ENCODE measurements at regions of chr10 and their contacts with region 1.

Region 1: DNA sequence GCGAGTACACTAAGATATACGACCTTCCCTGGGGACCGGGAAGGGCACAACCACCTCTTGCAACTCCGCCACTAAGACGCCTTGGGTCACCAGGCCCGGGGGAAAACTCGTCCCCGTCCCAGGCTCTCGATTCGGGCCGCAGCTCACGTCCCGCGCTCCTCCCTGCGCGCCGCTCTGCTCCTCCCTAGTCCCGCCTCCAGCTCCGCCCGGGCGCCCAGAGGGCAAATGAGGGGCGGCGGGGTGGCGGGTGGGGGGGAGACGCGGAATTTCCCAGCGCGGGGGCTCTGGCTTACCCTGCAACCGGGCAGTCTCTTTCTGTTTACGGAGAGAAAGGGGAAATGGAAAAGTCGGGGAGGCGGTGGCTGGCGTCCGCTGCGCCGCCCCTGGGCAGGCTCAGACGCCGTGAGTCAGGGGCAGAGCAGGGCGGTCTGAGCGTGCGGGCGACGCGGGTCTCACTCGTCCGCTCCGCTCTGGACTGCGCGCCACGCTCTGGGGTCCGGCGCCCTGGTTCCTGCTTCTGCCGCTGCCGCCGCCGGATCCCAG is at the start of gene MAP3K8:
- DNase-seq: peak; percentile 52 to 92 (median 59)
- ATAC-seq: peak; percentile 86
- H3K4me3 ChIP-seq: peak within 1 kb of the TSS; percentile 69
- H3K4me3 Mint-ChIP-seq: peak within 1 kb of the TSS; percentile 82 to 93 (median 89)
- H3K27ac ChIP-seq: peak within 1 kb of the TSS; percentile 68
- H3K27ac Mint-ChIP-seq: peak within 1 kb of the TSS; percentile 23 to 94 (median 70)
- H3K4me1 ChIP-seq: peaks cover 21 to 22% of the 10 kb centered on the region in 2 donors
- H3K4me1 Mint-ChIP-seq: peaks cover 37 to 62% (median 46%) of the 10 kb centered on the region in 7 donors
- H3K27me3 ChIP-seq: no peaks in the 10 kb centered on the region
- H3K27me3 Mint-ChIP-seq: no peaks in the 10 kb centered on the region
- total RNA-seq, gene MAP3K8: 0.70 to 102 (median 31.2) TPM

Region 2: DNA sequence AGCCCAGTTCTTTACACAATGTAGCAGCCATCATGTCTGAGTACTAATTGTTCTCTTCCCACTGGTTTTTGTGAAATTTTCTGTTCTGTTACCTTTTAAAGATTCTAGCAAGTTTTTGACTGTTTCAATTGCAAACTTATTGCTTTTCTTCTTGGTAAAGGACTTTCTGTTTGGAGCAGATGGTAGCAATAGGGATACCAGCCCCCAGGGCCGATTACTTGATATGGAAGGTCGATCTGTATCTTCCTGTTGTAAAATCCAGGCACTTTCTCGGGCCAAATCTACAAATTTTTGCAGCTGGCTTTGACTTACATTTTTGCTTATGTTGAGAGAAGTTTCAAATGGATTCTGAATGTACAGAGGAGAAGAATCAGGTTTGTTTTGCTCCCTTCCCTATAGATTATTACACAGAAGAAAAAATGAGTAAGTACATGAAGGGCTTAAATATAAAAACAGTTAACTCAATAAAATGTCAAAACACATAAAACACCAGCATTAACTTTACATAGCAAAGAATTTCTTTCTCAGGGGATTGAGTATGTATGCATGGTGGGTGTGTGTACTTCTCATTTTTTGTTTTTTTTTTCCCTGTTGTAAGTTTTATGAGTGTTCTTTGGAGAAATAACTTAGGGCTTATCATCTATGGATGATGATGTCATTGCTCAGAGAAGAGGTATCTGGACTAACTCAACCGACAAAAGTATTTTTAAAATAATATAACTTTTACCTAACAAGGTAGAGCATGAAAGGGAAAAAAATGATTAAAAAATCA is 120.0 kb before region 1 on chr10:
- CTCF ChIA-PET with region 1: no interaction called
- POLR2A ChIA-PET with region 1: no interaction called
- intact Hi-C with region 1: no loop called
- DNase-seq: no peak
- ATAC-seq: no peak
- H3K4me3 ChIP-seq: no peak overlapping the region
- H3K4me3 Mint-ChIP-seq: no peak overlapping the region
- H3K27ac ChIP-seq: no peak overlapping the region
- H3K27ac Mint-ChIP-seq: peak overlapping the region in 1 of 9 donors; percentile 31
- H3K4me1 ChIP-seq: no peaks in the 10 kb centered on the region
- H3K4me1 Mint-ChIP-seq: peaks cover 0 to 13% (median 7%) of the 10 kb centered on the region in 7 donors
- H3K27me3 ChIP-seq: no peaks in the 10 kb centered on the region
- H3K27me3 Mint-ChIP-seq: no peaks in the 10 kb centered on the region

Region 3: DNA sequence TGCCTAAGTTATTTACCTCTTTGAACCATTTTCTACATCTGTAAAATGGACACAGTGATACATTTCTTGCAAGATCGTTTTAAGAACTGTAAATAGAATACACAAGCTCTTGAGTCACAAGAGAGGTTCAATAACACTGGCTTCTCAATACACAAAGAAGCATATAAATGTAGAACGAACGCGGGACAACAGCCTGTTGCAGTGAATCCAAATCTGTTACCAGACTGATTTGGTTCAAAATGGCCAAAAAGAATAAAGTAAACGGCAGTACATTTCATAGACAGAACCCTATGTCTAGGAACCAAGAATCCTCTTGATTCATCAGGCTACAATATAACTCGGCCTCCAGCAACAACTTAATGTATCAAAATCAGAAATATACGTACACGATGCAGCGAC is 85.4 kb before region 1 on chr10:
- CTCF ChIA-PET with region 1: no interaction called
- POLR2A ChIA-PET with region 1: no interaction called
- intact Hi-C with region 1: loop called (anchors 5 kb)
- DNase-seq: no peak
- ATAC-seq: no peak
- H3K4me3 ChIP-seq: peak overlapping the region; percentile 86
- H3K4me3 Mint-ChIP-seq: peak overlapping the region; percentile 92 to 99 (median 97)
- H3K27ac ChIP-seq: peak overlapping the region; percentile 84
- H3K27ac Mint-ChIP-seq: peak overlapping the region; percentile 87 to 98 (median 92)
- H3K4me1 ChIP-seq: peaks cover 11 to 18% of the 10 kb centered on the region in 2 donors
- H3K4me1 Mint-ChIP-seq: peaks cover 40 to 63% (median 55%) of the 10 kb centered on the region in 7 donors
- H3K27me3 ChIP-seq: no peaks in the 10 kb centered on the region
- H3K27me3 Mint-ChIP-seq: peaks cover 0 to 5% (median 0%) of the 10 kb centered on the region in 5 donors

Region 4: GRCh38 chr10:30456266-30456665 is 22.5 kb after region 1 on chr10:
- CTCF ChIA-PET with region 1: interaction called, 3 read pairs
- POLR2A ChIA-PET with region 1: interaction called, 4 read pairs
- intact Hi-C with region 1: loop called (anchors 1 to 2 kb)
- DNase-seq: peak in 5 of 9 donors; percentile 11 to 22 (median 16)
- ATAC-seq: peak; percentile 74
- H3K4me3 ChIP-seq: peak overlapping the region; percentile 17
- H3K4me3 Mint-ChIP-seq: peak overlapping the region; percentile 58 to 78 (median 72)
- H3K27ac ChIP-seq: no peak overlapping the region
- H3K27ac Mint-ChIP-seq: peak overlapping the region; percentile 11 to 85 (median 53)
- H3K4me1 ChIP-seq: peaks cover 18 to 26% of the 10 kb centered on the region in 2 donors
- H3K4me1 Mint-ChIP-seq: peaks cover 17 to 35% (median 20%) of the 10 kb centered on the region in 7 donors
- H3K27me3 ChIP-seq: no peaks in the 10 kb centered on the region
- H3K27me3 Mint-ChIP-seq: no peaks in the 10 kb centered on the region

Region 5: DNA sequence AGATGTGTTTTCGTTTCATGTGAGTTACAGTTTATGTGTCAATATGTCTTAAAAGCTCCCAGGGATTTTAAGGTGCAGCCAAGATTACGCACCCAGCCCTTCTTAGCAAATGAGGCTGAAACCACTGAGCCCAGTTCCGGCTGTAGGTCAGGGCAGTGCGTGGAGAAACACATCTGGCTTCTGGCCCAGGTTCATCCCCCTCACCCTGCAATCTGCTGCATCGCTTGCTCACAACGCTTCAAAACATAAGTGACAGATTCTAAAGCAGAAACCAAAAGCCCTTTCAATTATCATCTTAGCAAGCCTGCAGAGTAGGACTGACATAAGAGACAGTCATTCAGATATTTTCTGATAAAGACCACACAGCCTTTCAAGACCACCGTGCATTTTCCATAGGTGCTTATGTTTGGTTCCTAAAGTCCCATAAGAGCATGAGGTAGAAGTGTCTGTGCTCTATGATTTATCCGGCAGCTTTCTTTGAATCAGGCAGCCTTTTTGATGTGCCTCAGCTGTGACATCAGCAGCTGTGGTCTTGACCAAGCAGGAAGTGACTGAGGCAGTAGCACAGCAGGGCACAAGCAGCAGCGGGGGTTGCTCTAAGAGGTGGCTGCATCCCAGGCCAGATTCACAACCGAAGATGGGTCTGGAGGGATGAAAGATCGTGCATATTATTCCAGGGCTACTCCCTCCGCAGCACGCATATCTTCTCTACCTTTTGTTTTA is 267.8 kb after region 1 on chr10:
- CTCF ChIA-PET with region 1: no interaction called
- POLR2A ChIA-PET with region 1: no interaction called
- intact Hi-C with region 1: loop called (anchors 2 to 10 kb)
- DNase-seq: peak in 8 of 9 donors; percentile 68 to 81 (median 74)
- ATAC-seq: peak; percentile 80
- H3K4me3 ChIP-seq: peak overlapping the region; percentile 31
- H3K4me3 Mint-ChIP-seq: peak overlapping the region; percentile 68 to 98 (median 88)
- H3K27ac ChIP-seq: peak overlapping the region; percentile 86
- H3K27ac Mint-ChIP-seq: peak overlapping the region; percentile 88 to 98 (median 96)
- H3K4me1 ChIP-seq: peaks cover 63 to 74% of the 10 kb centered on the region in 2 donors
- H3K4me1 Mint-ChIP-seq: peaks cover 51 to 97% (median 88%) of the 10 kb centered on the region in 7 donors
- H3K27me3 ChIP-seq: no peaks in the 10 kb centered on the region
- H3K27me3 Mint-ChIP-seq: no peaks in the 10 kb centered on the region

Measured in naive thymus-derived CD4-positive, alpha-beta T cell (primary cell).